H1 (cell line): ENCODE measurements at regions of chr17 and their contacts with region 1.

Region 1: DNA sequence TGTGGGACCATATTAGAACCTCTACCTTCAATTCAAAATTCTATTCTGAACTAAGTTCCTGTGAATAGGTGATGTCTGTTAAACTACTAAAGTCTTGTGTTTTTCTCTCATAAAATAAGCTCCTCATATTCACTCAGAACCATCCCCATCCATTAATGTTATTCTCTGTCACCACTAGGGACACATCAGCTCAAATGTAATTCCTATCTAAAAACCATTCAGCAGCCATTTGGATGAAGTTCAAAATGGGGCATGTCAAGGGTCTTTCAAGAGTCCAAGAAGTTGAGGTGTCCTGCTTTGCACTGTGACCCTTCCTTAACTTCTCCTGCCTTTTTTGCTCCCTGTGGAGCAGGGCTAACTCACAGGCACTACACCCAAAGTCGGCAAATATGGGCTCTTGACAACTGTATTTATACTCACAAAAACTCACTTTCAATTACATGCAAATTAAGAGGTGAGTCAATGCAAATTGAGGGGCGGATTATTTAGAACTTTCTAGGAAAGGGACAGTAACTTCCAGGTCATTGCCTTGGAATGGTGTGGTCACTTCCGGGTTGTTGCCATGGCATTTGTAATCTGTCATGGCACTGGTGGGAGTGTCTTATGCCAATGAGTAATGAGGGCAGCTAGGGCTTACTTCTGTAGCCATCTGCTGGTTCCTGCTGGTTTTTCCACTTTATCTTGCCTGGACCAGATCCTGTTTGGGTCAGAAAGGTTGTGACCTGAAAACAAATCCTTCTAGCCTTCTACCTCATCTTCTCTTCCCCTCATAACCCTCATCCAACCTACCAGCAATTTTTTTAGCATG is 128.2 kb upstream of the COX10 start:
- DNase-seq: no peak
- H3K4me3 ChIP-seq: no peak overlapping the region
- H3K27ac ChIP-seq: no peak overlapping the region
- H3K4me1 ChIP-seq: no peaks in the 10 kb centered on the region
- H3K27me3 ChIP-seq: no peaks in the 10 kb centered on the region
- CTCF ChIP-seq: peak in 1 of 3 experiments; percentile 27; a peak in 1 of 4 replicates
- EP300 ChIP-seq: no peak
- POLR2A ChIP-seq: no peak
- RAD21 ChIP-seq: peak in 1 of 2 experiments; percentile 16; a peak in 1 of 4 replicates

Region 2: GRCh38 chr17:13851889-13852288 is 89.2 kb before region 1 on chr17:
- CTCF ChIA-PET with region 1: no interaction called
- POLR2A ChIA-PET with region 1: no interaction called
- DNase-seq: no peak
- H3K4me3 ChIP-seq: no peak overlapping the region
- H3K27ac ChIP-seq: no peak overlapping the region
- H3K4me1 ChIP-seq: no peaks in the 10 kb centered on the region
- H3K27me3 ChIP-seq: no peaks in the 10 kb centered on the region
- CTCF ChIP-seq: no peak
- EP300 ChIP-seq: no peak
- POLR2A ChIP-seq: no peak
- RAD21 ChIP-seq: no peak

Region 3: DNA sequence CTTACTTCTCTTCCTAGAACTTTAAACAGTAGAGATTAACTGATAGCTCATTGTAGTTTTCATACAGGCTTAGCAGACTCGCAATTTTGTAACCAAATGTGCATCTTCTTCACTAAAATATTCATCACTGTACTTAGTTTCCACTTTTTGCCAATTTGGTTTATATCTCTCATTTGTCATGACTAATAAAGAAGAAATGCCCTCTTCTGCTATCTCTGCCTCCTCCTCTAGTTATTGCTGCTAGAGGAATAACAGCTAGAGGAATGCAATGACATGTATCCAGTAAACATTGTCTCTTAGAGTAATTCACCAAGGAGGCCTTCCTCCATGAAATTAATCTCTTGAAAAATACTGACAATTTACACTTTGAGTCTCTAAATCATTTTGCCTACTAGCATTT is 12.8 kb after region 1 on chr17:
- CTCF ChIA-PET with region 1: interaction called, 12 read pairs
- POLR2A ChIA-PET with region 1: no interaction called
- DNase-seq: no peak
- H3K4me3 ChIP-seq: no peak overlapping the region
- H3K27ac ChIP-seq: no peak overlapping the region
- H3K4me1 ChIP-seq: no peaks in the 10 kb centered on the region
- H3K27me3 ChIP-seq: no peaks in the 10 kb centered on the region
- CTCF ChIP-seq: no peak
- EP300 ChIP-seq: no peak
- POLR2A ChIP-seq: no peak
- RAD21 ChIP-seq: no peak